Activated CD4-positive, alpha-beta T cell treated with anti-CD3 and anti-CD28 coated beads for 36 hours (primary cell): ENCODE measurements at regions of chr11 and their contacts with region 1.

Region 1: GRCh38 chr11:3215346-3216045 is 3.1 kb downstream of the MRGPRG start:
- DNase-seq: no peak
- ATAC-seq: no peak
- H3K4me3 Mint-ChIP-seq: no peak overlapping the region
- H3K27ac Mint-ChIP-seq: no peak overlapping the region
- H3K4me1 Mint-ChIP-seq: peaks cover 3% of the 10 kb centered on the region
- H3K27me3 Mint-ChIP-seq: peaks cover 24% of the 10 kb centered on the region

Region 2: GRCh38 chr11:3109921-3110706 is 105.4 kb before region 1 on chr11:
- CTCF ChIA-PET with region 1: interaction called, 10 read pairs
- POLR2A ChIA-PET with region 1: no interaction called
- intact Hi-C with region 1: loop called (anchors 1 kb)
- DNase-seq: peak; percentile 74
- ATAC-seq: peak; percentile 92
- H3K4me3 Mint-ChIP-seq: no peak overlapping the region
- H3K27ac Mint-ChIP-seq: no peak overlapping the region
- H3K4me1 Mint-ChIP-seq: no peaks in the 10 kb centered on the region
- H3K27me3 Mint-ChIP-seq: no peaks in the 10 kb centered on the region